ENCODE measurements at regions of chr10 and their contacts with region 1.

Region 1: GRCh38 chr10:72048450-72049124 is 39.8 kb downstream of the SPOCK2 start:
- DNase-seq: peak; percentile 91 to 97 (median 94)
- H3K4me3 ChIP-seq: no peak overlapping the region
- H3K27ac ChIP-seq: peak overlapping the region in 44 of 59 donors; percentile 1 to 98 (median 45)
- H3K27me3 ChIP-seq: no peaks in the 10 kb centered on the region
- CTCF ChIP-seq: peak; percentile 98 to 100 (median 100)

Region 2: GRCh38 chr10:71829171-71829570 is 219.4 kb before region 1 on chr10:
- intact Hi-C with region 1: loop called in 1 of 2 experiments (anchors 10 kb)
- DNase-seq: peak in 1 of 10 donors; percentile 42
- H3K4me3 ChIP-seq: no peak overlapping the region
- H3K27ac ChIP-seq: peak overlapping the region in 40 of 59 donors; percentile 4 to 72 (median 33)
- H3K27me3 ChIP-seq: no peaks in the 10 kb centered on the region
- CTCF ChIP-seq: no peak

Region 3: GRCh38 chr10:71893920-71894319 is 154.7 kb before region 1 on chr10:
- intact Hi-C with region 1: loop called (anchors 1 to 2 kb)
- DNase-seq: no peak
- H3K4me3 ChIP-seq: no peak overlapping the region
- H3K27ac ChIP-seq: no peak overlapping the region
- H3K27me3 ChIP-seq: no peaks in the 10 kb centered on the region
- CTCF ChIP-seq: no peak

Region 4: DNA sequence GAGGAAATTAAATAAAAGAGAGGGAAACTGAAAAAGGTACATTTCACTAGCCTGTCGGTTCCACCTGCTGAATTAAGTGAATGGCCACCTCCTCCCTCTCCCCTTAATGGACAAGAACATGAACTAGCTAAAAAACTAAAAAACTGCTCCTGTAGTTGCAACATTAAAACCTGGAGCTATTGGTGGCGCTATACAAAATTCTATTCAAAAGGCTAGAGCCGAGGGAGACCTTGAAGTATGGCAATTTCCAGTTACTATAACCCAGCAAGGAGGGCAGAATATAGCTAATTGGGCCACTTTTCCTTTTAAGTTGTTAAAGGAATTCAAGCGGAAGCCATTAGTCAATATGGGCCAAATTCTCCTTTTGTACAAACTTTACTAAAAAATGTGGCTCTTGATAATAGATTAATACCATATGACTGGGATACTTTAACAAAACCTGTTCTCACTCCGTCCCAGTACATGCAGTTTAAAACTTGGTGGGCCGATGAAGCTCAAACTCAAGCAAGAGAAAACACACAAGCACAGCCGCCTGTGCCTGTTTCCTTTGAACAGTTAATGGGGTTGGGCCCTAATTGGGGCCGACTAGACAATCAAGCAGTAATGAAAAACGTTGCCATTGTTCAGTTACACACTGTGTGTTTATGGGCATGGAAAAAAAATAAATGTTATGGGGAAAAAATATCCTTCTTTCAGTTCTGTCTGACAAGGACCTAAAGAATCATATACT is 90.9 kb before region 1 on chr10:
- intact Hi-C with region 1: loop called (anchors 1 to 2 kb)
- DNase-seq: no peak
- H3K4me3 ChIP-seq: no peak overlapping the region
- H3K27ac ChIP-seq: peak overlapping the region in 55 of 59 donors; percentile 1 to 86 (median 64)
- H3K27me3 ChIP-seq: no peaks in the 10 kb centered on the region
- CTCF ChIP-seq: peak in 6 of 56 donors; percentile 6 to 22 (median 12)

Region 5: DNA sequence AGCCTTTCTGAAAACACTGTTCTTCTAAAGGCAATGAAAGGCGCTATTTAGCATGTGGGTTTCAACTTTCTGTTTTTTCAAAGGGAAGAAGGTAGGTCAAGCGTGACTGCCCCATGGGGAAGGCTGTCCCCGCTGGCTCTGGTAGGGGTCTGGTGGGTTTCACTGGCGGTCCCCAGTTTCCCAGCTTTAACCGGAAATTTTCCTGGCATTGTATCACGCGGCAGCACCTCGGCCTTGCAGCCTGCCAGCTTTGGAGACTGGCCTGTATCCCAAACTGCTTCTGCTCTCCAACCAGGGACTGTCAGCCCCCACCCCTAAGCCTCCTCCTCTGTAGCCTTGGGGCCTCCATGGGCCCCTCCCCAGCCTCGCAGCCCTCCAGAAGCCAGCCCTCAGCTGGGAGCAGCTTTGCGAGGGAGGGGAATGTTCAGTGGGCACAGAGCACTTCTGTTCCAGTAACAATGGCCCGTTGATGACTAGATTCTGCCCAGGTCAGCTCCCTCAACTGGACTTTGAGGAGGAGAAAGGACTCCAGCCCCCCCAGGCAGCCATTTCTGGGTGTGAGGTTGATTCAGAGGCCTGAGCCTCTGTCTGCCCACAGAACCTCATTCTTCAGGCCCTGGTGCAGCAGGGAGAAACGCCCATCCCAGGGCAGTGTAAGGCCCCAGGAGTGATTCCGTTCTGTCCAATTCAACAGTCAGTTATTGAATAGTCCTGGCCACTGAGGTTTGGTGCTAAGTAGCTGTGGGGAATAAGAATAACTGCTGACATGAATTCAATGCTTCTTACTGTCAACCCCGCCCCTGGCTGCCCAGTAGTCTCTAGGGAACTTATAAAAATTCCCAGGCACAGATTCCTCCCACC is 67.3 kb before region 1 on chr10:
- intact Hi-C with region 1: loop called in 1 of 2 experiments (anchors 2 kb)
- DNase-seq: peak in 9 of 10 donors; percentile 75 to 94 (median 92)
- H3K4me3 ChIP-seq: peak overlapping the region in 23 of 59 donors; percentile 0 to 40 (median 14)
- H3K27ac ChIP-seq: peak overlapping the region; percentile 83 to 100 (median 96)
- H3K27me3 ChIP-seq: no peaks in the 10 kb centered on the region
- CTCF ChIP-seq: peak in 5 of 56 donors; percentile 3 to 28 (median 11)

Region 6: DNA sequence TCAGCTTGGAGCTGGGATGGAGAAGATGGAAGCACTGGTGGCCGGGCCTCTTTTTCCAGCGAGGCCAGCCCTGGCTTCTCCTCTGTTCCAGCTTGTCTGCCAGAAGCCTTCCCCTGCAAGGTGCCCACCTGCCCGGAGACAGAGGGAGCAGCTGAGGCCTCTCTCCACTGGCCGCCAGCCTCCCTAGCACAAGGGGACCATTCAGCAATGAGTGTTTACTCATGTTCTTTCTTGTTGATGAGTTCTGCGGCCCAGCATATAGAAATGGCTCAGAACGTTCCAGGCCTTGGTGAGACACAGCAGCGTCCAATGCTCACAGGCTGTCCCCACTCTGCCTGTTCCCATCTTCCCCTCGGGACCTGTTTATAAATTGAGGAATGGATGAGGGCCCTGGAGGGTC is 37.1 kb before region 1 on chr10:
- intact Hi-C with region 1: loop called in 1 of 2 experiments (anchors 1 kb)
- DNase-seq: peak in 9 of 10 donors; percentile 58 to 92 (median 83)
- H3K4me3 ChIP-seq: peak overlapping the region in 1 of 59 donors; percentile 5
- H3K27ac ChIP-seq: peak overlapping the region; percentile 84 to 100 (median 96)
- H3K27me3 ChIP-seq: no peaks in the 10 kb centered on the region
- CTCF ChIP-seq: peak in 34 of 56 donors; percentile 3 to 65 (median 27)

Region 7: DNA sequence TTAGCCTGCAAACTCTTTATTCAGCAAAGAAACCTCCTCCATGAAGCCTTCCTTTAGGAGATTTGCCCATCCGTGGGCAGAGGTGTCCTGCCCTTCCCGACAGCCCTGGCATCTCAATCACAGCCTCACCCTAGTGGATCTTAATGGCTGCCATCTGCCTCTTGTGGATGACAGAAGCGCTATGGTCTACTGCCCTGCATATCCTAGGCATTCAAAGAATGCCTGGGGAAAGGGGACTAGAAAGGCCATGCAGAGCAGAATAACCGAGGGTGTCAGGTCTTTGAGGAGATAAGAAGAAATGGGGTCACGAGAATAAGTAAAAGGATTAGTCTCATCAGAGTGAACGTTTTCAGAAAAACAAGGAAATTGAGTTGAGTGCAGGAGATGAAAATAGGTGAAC is 97.5 kb after region 1 on chr10:
- intact Hi-C with region 1: no loop called
- DNase-seq: no peak
- H3K4me3 ChIP-seq: no peak overlapping the region
- H3K27ac ChIP-seq: peak overlapping the region in 11 of 59 donors; percentile 9 to 59 (median 30)
- H3K27me3 ChIP-seq: no peaks in the 10 kb centered on the region
- CTCF ChIP-seq: no peak

Region 8: DNA sequence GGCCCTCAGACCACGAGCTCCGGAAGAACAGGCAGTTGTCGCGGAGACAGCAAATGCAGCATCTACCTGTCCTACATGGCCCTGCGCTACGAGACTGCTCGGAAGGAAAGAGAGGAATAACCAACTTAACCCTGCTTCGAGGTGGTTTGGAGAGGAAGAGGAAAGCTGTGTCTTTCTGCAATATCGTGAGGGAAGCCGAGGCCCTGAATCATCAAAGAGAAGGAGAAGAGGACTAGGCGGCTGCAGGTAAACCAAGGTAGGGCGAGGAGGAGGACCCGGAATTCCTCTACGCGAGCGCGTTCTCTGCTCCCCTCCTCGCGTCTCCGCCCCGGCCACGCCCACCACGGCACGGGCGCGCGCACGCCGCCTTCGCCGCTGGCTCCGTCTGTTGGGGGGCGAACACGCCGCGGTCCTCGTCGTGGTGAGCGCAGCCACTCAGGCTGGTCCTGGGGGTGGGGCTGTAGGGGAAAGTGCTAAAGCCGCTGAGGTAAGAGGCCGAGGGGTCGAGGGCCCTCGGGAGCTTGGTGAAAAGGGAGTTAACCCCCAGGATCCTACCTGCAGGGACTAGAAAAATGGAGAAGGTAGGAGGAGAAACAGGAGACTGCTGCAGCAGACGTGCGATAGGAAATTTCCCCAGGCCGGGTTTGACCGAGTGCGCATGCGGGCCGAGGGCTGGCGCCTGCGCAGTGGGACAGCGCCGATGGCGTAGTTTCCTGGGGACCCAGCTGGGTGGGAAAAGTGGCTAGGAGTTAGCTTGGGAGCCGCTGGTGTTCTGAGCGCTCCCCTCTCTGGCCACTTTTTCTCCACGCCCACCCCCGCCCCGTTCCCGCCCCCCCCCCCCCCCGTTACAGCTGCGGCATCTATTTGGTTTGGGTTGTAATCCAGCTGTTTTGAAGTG is 167.3 kb after region 1 on chr10 and contains the starts of genes ANAPC16 and ASCC1:
- intact Hi-C with region 1: loop called (anchors 5 to 10 kb)
- DNase-seq: peak; percentile 75 to 94 (median 88)
- H3K4me3 ChIP-seq: peak within 1 kb of the TSS; percentile 61 to 97 (median 82)
- H3K27ac ChIP-seq: peak within 1 kb of the TSS; percentile 95 to 100 (median 100)
- H3K27me3 ChIP-seq: no peaks in the 10 kb centered on the region
- CTCF ChIP-seq: peak in 22 of 56 donors; percentile 10 to 52 (median 26)
- total RNA-seq, gene ANAPC16: 27.8 to 74.8 (median 40.9) TPM
- total RNA-seq, gene ASCC1: 22.8 to 68.2 (median 40.7) TPM

Region 9: GRCh38 chr10:72292223-72292691 is 243.7 kb after region 1 on chr10:
- intact Hi-C with region 1: no loop called
- DNase-seq: no peak
- H3K4me3 ChIP-seq: no peak overlapping the region
- H3K27ac ChIP-seq: no peak overlapping the region
- H3K27me3 ChIP-seq: no peaks in the 10 kb centered on the region
- CTCF ChIP-seq: no peak

Region 10: GRCh38 chr10:72841487-72841886 is 792.9 kb after region 1 on chr10:
- intact Hi-C with region 1: no loop called
- DNase-seq: no peak
- H3K4me3 ChIP-seq: no peak overlapping the region
- H3K27ac ChIP-seq: no peak overlapping the region
- H3K27me3 ChIP-seq: no peaks in the 10 kb centered on the region
- CTCF ChIP-seq: no peak

Measured in dorsolateral prefrontal cortex (tissue), 120 donors.